Activated naive CD4-positive, alpha-beta T cell treated with anti-CD3 and anti-CD28 coated beads for 36 hours (primary cell): ENCODE measurements at regions of chr12 and their contacts with region 1.

Region 1: DNA sequence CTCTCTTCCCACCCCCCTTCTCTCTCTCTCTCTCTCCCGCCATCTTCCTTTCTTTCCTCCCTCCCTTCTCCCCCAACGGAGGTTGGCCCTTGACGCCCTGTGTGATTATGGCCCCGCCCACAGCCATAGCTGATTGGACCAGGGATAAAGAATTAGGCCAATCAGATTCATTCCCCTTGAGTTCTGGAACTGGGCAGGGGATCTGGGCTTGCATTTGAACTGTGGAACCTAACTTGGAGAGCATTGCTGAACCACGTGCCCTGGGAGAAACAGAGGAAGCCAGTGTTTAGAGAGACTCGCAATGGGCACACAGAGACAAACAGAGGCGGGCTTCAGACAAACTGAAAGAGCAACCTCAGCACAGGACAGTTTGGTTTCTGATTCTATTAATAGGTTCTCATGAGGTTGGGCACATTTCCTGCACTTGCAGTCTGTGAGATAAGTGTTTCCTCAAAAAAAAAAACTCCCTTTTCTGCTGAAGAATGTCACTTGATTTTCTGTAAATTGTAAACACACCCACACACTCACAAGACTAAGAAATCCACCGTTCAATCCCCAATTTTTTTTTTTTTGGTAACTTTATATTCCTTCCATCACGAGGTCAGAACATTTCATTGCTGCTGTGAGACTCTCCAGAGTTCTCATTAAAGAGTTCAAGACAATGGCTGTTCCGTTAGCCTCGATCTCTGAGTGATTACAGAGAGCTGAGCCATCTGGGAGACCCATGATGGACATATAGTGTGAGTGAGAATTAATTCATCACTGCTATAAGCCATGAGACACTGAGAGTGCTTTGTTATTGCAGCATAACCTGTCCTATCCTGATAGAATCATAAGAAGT is 3.5 kb upstream of the P2RX7 start:
- DNase-seq: peak; percentile 93
- H3K4me3 Mint-ChIP-seq: peak overlapping the region; percentile 60
- H3K27ac Mint-ChIP-seq: peak overlapping the region; percentile 98
- H3K4me1 Mint-ChIP-seq: peaks cover 62% of the 10 kb centered on the region
- H3K27me3 Mint-ChIP-seq: no peaks in the 10 kb centered on the region

Region 2: DNA sequence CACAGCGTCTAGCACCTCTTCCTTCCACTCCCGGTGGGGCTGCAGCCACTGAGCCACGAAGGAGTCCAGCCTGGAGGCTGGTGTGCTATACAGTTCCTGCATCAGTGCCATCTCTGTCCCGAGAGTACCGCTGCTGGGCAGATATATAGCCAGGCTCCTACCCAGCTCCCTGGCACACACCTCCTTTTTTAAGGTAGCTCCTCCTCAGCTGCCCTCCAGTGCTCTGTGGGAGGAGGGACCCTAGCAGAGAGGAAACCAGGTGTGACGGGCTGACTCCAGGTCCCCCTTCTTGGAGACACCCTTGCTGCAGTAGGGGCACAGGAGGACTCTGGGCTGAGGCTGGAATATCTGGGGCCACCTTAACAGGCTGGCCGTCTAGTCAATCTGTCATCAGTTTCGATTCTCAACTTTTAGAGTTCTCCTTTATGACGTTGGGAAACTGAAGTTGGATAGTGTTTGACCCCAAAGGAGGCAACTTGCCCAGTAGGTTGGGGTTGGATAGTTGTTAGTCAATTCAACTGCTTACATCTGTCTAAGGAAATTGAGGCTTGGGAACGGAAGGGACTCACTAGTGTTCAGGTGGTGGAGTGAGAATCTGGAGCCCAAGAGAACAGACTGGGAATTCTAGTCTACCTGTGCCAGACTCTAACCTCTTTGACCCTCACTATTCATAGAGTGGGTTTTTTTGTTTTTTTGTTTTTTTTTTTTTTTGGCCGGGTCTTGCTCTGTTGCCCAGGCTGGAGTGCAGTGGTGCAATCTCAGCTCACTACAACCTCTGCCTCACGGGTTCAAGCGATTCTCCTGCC is 90.1 kb before region 1 on chr12 and contains the start of gene OASL:
- CTCF ChIA-PET with region 1: interaction called, 3 read pairs
- intact Hi-C with region 1: loop called (anchors 1 kb)
- DNase-seq: peak; percentile 55
- H3K4me3 Mint-ChIP-seq: peak within 1 kb of the TSS; percentile 75
- H3K27ac Mint-ChIP-seq: peak within 1 kb of the TSS; percentile 70
- H3K4me1 Mint-ChIP-seq: peaks cover 50% of the 10 kb centered on the region
- H3K27me3 Mint-ChIP-seq: peaks cover 8% of the 10 kb centered on the region
- total RNA-seq, gene OASL: 12.4 to 13.4 TPM

Region 3: DNA sequence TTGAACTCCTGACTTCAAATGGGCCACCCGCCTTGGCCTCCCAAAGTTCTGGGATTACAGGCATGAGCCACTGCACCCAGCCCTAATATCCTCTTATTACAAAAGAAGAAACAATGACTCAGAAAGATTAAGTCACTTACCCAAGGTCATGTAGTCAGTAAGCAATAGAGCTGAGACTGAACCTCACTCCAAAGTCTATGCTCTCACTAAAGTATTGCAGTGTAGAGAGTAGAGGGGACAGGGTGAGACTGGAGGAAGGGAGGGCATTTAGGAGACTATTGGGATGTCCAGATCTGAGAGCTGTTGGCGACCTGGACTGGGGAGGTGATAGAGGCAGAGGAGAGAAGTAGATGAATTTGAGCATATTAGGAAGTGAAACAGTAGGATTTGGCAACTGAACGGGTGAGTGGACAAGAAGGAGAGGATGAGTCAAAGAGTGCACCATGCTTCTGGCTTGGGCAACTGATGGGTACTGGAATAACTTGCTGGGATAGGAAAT is 15.3 kb after region 1 on chr12:
- CTCF ChIA-PET with region 1: interaction called, 5 read pairs
- intact Hi-C with region 1: loop called (anchors 1 kb)
- DNase-seq: peak; percentile 48
- H3K4me3 Mint-ChIP-seq: no peak overlapping the region
- H3K27ac Mint-ChIP-seq: peak overlapping the region; percentile 77
- H3K4me1 Mint-ChIP-seq: peaks cover 29% of the 10 kb centered on the region
- H3K27me3 Mint-ChIP-seq: no peaks in the 10 kb centered on the region

Region 4: DNA sequence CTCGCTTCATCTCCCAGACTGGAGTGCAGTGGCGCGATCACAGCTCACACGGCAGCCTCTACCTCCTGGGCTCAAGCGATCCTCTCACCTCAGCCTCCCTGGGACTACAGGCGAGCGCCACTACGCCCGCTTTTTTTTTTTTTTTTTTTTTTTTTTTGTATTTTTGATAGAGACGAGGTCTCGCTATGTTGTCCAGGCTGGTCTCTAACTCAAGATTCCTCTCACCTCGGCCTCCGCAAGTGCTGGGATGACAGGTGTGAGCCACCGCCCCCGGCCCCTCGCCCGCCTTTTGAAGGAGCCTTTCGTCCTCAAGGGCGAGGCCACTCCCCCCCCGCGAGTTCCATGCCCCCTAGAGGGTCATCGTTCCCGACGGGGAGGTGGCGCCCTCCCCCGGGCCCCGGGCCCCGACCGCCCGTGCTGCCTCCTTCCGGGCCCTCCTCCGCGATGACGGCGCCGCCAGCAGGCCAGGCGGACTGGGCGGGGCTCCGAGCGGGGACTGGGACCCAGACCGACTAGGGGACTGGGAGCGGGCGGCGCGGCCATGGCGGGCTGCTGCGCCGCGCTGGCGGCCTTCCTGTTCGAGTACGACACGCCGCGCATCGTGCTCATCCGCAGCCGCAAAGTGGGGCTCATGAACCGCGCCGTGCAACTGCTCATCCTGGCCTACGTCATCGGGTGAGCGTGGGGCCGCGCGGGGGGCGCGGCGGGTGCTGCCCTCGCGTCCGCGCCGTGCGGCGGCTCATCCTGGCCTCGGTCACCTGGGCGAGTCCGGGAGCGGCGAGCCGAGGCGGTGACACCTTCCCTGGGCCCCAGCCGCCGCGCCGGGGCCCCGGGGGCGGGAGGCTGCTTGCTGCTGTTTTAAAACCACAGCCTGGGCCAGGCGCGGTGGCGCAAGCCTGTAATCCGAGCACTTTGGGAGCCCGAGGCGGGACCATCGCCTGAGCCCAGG is 80.7 kb after region 1 on chr12 and contains the start of gene P2RX4:
- CTCF ChIA-PET with region 1: no interaction called
- intact Hi-C with region 1: loop called (anchors 1 kb)
- DNase-seq: peak; percentile 91
- H3K4me3 Mint-ChIP-seq: peak within 1 kb of the TSS; percentile 81
- H3K27ac Mint-ChIP-seq: peak within 1 kb of the TSS; percentile 89
- H3K4me1 Mint-ChIP-seq: peaks cover 23% of the 10 kb centered on the region
- H3K27me3 Mint-ChIP-seq: no peaks in the 10 kb centered on the region
- total RNA-seq, gene P2RX4: 14.2 to 18.0 TPM

Region 5: DNA sequence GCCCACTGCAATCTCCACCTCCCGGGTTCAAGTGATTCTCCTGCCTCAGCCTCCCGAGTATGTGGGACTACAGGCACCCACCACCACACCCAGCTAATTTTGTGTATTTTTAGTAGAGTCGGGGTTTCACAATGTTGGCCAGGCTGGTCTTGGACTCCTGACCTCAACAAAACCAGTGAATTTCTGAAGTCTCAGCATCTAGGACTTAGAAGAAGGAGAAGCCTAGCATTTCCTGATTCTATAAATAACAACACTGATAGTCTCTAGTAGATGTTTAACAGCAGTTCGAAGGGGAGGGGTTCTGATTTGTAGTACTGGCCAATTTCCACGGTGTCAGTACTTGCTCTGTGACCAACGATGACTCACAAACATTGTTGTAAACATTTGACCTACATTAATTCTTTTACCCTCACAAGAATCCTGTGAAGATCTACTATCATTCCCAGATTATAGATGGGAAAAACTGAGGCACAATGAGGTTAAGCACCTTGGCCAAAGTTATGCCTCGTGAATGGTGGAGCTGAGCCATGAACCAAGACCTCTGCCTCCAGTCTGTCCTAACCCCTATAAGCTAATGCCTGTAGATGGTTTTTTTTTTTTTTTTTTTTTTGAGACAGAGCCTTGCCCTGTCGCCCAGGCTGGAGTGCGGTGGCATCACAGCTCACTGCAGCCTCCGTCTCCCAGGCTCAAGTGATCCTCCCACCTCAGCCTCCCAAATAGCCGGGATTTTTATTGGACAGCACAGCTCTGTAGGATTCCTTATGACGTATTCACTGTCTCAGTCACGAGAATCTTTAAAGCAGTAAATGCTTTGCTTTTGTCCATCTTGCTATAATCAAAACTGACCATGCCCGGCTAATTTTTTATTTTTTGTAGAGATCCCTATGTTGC is 85.9 kb after region 1 on chr12:
- CTCF ChIA-PET with region 1: interaction called, 4 read pairs
- intact Hi-C with region 1: loop called (anchors 1 kb)
- DNase-seq: no peak
- H3K4me3 Mint-ChIP-seq: no peak overlapping the region
- H3K27ac Mint-ChIP-seq: peak overlapping the region; percentile 57
- H3K4me1 Mint-ChIP-seq: peaks cover 28% of the 10 kb centered on the region
- H3K27me3 Mint-ChIP-seq: no peaks in the 10 kb centered on the region

Region 6: GRCh38 chr12:121296618-121297434 is 167.6 kb after region 1 on chr12 and contains the start of gene CAMKK2:
- CTCF ChIA-PET with region 1: no interaction called
- intact Hi-C with region 1: loop called (anchors 5 kb)
- DNase-seq: peak; percentile 82
- H3K4me3 Mint-ChIP-seq: peak within 1 kb of the TSS; percentile 90
- H3K27ac Mint-ChIP-seq: peak within 1 kb of the TSS; percentile 65
- H3K4me1 Mint-ChIP-seq: peaks cover 24% of the 10 kb centered on the region
- H3K27me3 Mint-ChIP-seq: no peaks in the 10 kb centered on the region
- total RNA-seq, gene CAMKK2: 14.8 to 18.8 TPM